Activated B cell treated with CpG ODN at 0.5 μM for 24 hours (primary cell): ENCODE measurements at regions of chr10 and their contacts with region 1.

Region 1: GRCh38 chr10:65684896-65685295 is 1240.9 kb upstream of the LRRTM3 start:
- DNase-seq: no peak
- ATAC-seq: no peak
- H3K4me3 Mint-ChIP-seq: no peak overlapping the region
- H3K27ac Mint-ChIP-seq: no peak overlapping the region
- H3K4me1 Mint-ChIP-seq: no peaks in the 10 kb centered on the region
- H3K27me3 Mint-ChIP-seq: no peaks in the 10 kb centered on the region
- CTCF ChIP-seq: no peak

Region 2: DNA sequence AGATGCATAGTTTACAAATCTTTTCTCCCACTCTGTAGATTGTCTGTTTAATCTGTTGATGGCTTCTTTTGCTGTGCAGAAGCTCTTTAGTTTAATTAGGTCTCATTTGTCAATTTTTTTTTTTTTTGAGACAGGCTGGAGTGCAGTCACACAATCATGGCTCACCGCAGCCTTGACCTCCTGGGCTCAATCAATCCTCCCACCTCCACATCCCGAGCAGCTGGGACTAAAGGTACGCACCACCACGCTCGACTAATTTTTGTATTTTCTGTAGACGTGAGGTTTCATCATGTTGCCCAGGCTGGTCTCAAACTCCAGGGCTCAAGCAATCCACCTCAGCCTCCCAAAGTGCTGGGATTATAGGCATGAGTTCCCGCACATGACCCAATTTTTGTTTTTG is 507.9 kb before region 1 on chr10:
- CTCF ChIA-PET with region 1: no interaction called
- POLR2A ChIA-PET with region 1: no interaction called
- intact Hi-C with region 1: no loop called
- DNase-seq: no peak
- ATAC-seq: no peak
- H3K4me3 Mint-ChIP-seq: no peak overlapping the region
- H3K27ac Mint-ChIP-seq: no peak overlapping the region
- H3K4me1 Mint-ChIP-seq: no peaks in the 10 kb centered on the region
- H3K27me3 Mint-ChIP-seq: no peaks in the 10 kb centered on the region
- CTCF ChIP-seq: no peak

Region 3: GRCh38 chr10:65670087-65670486 is 14.8 kb before region 1 on chr10:
- CTCF ChIA-PET with region 1: no interaction called
- POLR2A ChIA-PET with region 1: interaction called, 10 read pairs
- intact Hi-C with region 1: no loop called
- DNase-seq: no peak
- ATAC-seq: no peak
- H3K4me3 Mint-ChIP-seq: no peak overlapping the region
- H3K27ac Mint-ChIP-seq: no peak overlapping the region
- H3K4me1 Mint-ChIP-seq: no peaks in the 10 kb centered on the region
- H3K27me3 Mint-ChIP-seq: no peaks in the 10 kb centered on the region
- CTCF ChIP-seq: no peak